ENCODE measurements at regions of chr11 and their contacts with region 1.

Region 1: GRCh38 chr11:83181815-83182214 is 11.7 kb upstream of the ANKRD42 start:
- DNase-seq: no peak
- ATAC-seq: no peak
- H3K4me3 Mint-ChIP-seq: no peak overlapping the region
- H3K27ac Mint-ChIP-seq: no peak overlapping the region
- H3K4me1 Mint-ChIP-seq: peaks cover 18% of the 10 kb centered on the region
- H3K27me3 Mint-ChIP-seq: no peaks in the 10 kb centered on the region
- CTCF ChIP-seq: no peak

Region 2: DNA sequence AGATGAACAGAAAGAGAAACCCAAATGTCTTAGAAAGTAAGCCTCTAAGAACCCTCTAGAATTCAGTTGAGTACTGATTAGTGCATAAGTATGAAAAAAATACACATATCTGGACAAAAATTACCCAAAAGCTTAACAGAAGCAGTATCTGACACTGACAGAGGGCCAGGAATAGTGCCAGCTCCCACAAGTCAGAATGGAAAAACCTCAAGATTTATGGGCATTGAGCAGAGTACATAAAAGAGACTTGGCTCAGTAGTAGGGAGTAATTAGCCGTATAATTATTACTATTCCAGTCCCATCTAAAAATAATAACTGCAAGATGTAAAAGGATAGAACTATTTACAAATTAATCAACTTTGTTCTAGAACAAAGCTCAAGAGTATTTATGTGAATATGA is 1282.7 kb before region 1 on chr11:
- CTCF ChIA-PET with region 1: no interaction called
- POLR2A ChIA-PET with region 1: no interaction called
- intact Hi-C with region 1: no loop called
- DNase-seq: no peak
- ATAC-seq: no peak
- H3K4me3 Mint-ChIP-seq: no peak overlapping the region
- H3K27ac Mint-ChIP-seq: no peak overlapping the region
- H3K4me1 Mint-ChIP-seq: peaks cover 10% of the 10 kb centered on the region
- H3K27me3 Mint-ChIP-seq: no peaks in the 10 kb centered on the region
- CTCF ChIP-seq: no peak

Region 3: DNA sequence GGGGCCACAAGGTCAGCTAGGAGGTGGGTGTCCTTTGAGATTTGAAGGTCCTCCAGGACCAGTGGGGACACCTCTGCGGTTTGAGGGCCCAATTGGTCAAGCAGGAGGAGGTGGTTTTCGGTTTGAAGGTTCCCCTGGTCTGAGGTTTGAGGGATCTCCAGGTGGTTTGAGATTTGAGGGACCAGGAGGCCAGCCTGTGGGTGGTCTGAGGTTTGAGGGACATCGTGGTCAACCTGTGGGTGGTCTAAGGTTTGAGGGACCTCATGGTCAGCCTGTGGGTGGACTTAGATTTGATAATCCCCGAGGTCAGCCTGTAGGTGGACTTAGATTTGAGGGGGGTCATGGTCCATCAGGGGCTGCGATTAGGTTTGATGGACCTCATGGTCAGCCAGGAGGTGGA is 13.1 kb before region 1 on chr11:
- CTCF ChIA-PET with region 1: no interaction called
- POLR2A ChIA-PET with region 1: no interaction called
- intact Hi-C with region 1: loop called (anchors 2 kb)
- DNase-seq: no peak
- ATAC-seq: no peak
- H3K4me3 Mint-ChIP-seq: no peak overlapping the region
- H3K27ac Mint-ChIP-seq: no peak overlapping the region
- H3K4me1 Mint-ChIP-seq: peaks cover 72% of the 10 kb centered on the region
- H3K27me3 Mint-ChIP-seq: no peaks in the 10 kb centered on the region
- CTCF ChIP-seq: no peak

Region 4: DNA sequence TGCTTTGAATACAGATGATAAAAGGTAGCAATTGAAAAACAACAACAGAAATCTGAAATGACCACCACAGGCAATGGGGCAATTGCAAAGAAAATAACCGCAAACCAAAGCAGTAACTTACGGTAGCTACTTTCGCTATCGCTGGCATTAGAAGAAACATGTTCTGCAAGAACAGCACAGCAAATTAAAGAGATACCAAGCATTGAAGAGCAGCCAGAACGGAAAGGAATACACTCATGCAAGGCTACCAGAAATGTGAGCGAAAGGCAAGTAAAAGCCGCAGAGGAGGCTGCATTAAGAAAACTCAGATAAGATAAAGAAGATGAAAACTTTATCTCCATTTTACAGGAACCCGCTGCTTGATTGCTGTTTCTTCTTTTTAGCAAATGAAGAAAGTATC is 298.4 kb after region 1 on chr11:
- CTCF ChIA-PET with region 1: no interaction called
- POLR2A ChIA-PET with region 1: no interaction called
- intact Hi-C with region 1: no loop called
- DNase-seq: no peak
- ATAC-seq: no peak
- H3K4me3 Mint-ChIP-seq: no peak overlapping the region
- H3K27ac Mint-ChIP-seq: no peak overlapping the region
- H3K4me1 Mint-ChIP-seq: no peaks in the 10 kb centered on the region
- H3K27me3 Mint-ChIP-seq: peaks cover 6% of the 10 kb centered on the region
- CTCF ChIP-seq: no peak

Measured in activated B cell treated with CpG ODN at 0.5 μM for 24 hours (primary cell).